ENCODE measurements at regions of chr12 and their contacts with region 1.

Region 1: GRCh38 chr12:44942714-44943113 is 66.6 kb upstream of the NELL2 start:
- DNase-seq: no peak
- H3K4me3 ChIP-seq: no peak overlapping the region
- H3K27ac ChIP-seq: no peak overlapping the region
- H3K27me3 ChIP-seq: no peaks in the 10 kb centered on the region
- CTCF ChIP-seq: no peak

Region 2: GRCh38 chr12:44921736-44922135 is 21.0 kb before region 1 on chr12:
- CTCF ChIA-PET with region 1: no interaction called
- POLR2A ChIA-PET with region 1: no interaction called
- DNase-seq: no peak
- H3K4me3 ChIP-seq: no peak overlapping the region
- H3K27ac ChIP-seq: no peak overlapping the region
- H3K27me3 ChIP-seq: no peaks in the 10 kb centered on the region
- CTCF ChIP-seq: no peak

Region 3: DNA sequence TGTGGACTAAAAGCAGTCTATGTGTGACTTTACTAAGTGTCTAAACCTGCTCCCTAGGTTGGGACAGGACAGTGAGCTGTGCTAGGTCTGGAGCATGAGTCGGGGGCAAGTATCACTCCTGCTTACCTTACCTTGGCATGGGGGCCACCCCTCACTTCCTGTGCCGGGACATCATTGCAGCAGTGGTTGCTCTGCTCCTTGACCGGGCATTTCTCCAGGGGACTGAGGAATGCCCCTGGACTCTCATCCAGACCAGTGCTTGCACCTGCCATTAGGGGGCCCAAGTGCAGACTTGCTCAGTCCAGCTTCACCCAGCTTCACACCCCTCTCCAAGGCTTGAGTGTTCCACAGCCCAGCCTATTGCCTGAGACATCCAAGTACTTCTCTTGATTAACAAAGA is 18.1 kb after region 1 on chr12:
- CTCF ChIA-PET with region 1: interaction called, 35 read pairs
- POLR2A ChIA-PET with region 1: no interaction called
- DNase-seq: no peak
- H3K4me3 ChIP-seq: no peak overlapping the region
- H3K27ac ChIP-seq: no peak overlapping the region
- H3K27me3 ChIP-seq: no peaks in the 10 kb centered on the region
- CTCF ChIP-seq: no peak

Measured in AG04450 (cell line).